Aorta (tissue), 5 donors: ENCODE measurements at regions of chr3 and their contacts with region 1.

Region 1: GRCh38 chr3:185983495-185984141 is 45.8 kb upstream of the TRA2B start:
- DNase-seq: peak; percentile 70 to 83
- ATAC-seq: peak; percentile 92
- H3K4me3 ChIP-seq: no peak overlapping the region
- H3K27ac ChIP-seq: no peak overlapping the region
- H3K4me1 ChIP-seq: no peaks in the 10 kb centered on the region
- H3K27me3 ChIP-seq: no peaks in the 10 kb centered on the region

Region 2: DNA sequence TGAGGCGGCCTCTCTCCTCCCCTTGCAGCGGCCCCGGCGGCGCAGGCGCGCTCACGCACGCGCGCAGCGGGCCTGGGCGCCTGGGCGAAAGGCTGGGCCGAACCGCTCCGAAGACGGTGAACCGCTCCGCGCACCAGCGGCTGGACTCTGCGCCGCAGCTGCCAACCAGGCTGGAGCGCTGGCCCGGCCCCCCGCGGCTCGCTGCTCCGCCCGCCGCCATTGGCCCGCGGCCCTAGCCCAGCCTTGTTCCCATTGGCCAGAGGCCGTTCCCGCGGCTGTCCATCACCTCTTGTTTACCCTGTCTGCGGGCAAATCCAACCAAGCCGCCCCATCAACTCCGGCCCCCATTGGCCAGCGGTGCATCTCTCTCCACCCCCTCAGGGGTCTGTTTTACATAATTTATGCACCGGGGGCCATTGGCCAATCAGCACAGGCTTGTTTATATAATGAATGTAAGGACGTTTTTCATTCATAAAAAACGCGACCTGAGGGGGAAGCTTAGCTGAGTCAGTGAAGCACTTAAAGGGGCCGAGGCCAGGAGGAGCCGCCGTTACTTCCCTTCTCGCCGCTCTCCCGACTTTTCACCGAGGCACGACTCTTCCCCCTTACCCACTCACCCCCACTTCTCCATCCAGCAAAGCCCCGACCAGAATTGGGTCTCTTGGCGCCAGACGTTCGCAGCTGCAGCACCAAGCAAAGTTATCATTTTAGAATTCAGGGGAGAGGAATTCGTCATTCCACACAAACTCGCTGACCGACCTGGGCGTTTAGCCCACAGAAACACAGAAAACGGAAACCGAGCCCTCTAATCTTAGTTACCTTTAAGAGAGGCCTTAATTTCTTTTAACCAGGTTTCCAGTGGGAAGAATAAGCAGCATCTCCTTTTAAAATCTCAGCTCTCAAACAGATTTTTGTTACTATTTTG is 125.6 kb after region 1 on chr3 and contains the start of gene ETV5:
- intact Hi-C with region 1: loop called (anchors 5 kb)
- DNase-seq: peak; percentile 99 to 100
- ATAC-seq: peak; percentile 97
- H3K4me3 ChIP-seq: peak within 1 kb of the TSS; percentile 75 to 87
- H3K27ac ChIP-seq: peak within 1 kb of the TSS; percentile 79 to 87
- H3K4me1 ChIP-seq: no peaks in the 10 kb centered on the region
- H3K27me3 ChIP-seq: no peaks in the 10 kb centered on the region
- total RNA-seq, gene ETV5: 25.5 to 34.0 TPM

Region 3: GRCh38 chr3:186235554-186235953 is 251.9 kb after region 1 on chr3:
- intact Hi-C with region 1: no loop called
- DNase-seq: no peak
- ATAC-seq: no peak
- H3K4me3 ChIP-seq: no peak overlapping the region
- H3K27ac ChIP-seq: no peak overlapping the region
- H3K4me1 ChIP-seq: no peaks in the 10 kb centered on the region
- H3K27me3 ChIP-seq: no peaks in the 10 kb centered on the region

Region 4: DNA sequence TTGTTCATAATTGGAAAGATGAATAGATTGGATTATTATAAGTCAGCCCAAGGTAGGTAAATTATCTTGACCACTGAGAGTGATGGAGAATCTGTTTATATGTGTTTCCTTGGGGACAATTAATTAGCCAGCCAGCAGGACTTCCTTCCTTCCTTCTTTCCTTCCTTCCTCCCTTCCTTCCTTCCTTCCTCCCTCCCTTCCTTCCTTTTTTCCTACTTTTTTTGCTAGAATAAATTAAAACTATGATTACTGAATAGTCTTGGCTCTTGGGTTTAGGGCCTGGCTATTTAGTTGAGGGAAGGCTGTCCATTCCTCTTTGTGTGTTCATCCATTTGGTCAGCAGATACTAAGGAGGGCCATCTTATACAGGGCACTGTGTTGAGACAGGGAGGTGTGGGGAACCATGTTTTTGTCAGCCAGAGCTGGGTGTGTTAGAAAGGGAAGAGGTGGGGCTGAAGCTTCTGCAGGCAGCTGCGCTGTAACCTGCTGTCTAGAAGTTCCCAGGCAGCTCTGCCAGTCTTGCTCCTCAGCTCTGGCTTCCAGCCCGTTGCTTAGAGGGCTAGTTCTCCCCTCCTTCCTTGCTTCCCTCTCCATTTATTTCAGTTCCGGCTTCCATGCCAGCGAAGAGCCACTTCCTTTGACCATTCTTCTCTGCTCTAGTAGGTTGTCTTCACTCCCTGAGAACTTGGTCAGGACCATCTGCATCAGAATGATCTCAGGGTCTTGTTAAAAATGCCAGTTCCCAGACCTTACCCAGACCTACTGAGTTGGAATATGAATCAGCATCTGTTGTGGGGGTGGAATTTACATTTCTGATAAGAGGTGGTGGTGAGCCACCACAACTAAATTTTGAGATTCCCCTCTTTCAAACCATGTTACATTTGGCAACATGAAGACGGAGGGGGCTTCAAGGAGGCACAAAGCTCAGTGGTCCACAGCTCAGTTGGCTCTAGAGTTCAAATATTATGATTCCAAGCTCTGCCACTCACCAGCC is 264.5 kb after region 1 on chr3:
- intact Hi-C with region 1: loop called in 1 of 2 experiments (anchors 5 kb)
- DNase-seq: peak in 1 of 2 donors; percentile 67
- ATAC-seq: no peak
- H3K4me3 ChIP-seq: no peak overlapping the region
- H3K27ac ChIP-seq: no peak overlapping the region
- H3K4me1 ChIP-seq: no peaks in the 10 kb centered on the region
- H3K27me3 ChIP-seq: no peaks in the 10 kb centered on the region

Region 5: DNA sequence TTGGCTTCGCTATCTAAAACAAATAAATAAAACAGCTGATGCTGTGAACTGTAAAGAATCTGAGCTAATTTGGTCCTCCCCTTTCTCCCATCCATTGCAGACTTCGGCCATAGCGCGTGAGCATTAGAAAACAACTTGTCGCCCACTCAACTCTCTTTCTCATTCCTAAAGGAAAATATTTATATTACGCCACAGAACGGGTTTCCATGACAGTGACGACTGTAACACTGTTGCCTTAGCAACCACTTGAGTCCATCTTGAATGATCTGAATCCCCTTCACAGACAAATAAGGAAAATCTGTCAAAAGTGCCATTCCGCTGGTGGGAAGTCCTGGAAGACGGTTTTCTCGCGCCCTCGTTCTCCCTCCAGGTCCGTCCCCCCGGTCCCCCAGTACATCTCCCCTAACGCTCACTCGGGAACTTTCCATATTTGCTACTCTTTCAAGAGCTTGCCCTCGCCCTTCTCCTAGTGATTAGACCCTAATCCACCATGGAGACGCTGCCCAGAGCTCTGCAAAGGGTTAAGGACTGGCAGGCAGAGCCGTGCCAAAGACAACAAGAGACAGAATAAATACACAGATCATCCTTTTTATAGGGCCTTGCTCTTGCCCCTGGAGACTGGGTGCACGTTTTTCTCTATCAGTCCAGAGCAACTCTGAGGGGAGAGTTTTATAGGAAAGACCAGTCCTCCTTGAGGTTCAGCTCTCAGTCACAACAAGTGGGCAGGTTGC is 510.1 kb after region 1 on chr3:
- intact Hi-C with region 1: loop called in 1 of 2 experiments (anchors 5 kb)
- DNase-seq: no peak
- ATAC-seq: peak; percentile 62
- H3K4me3 ChIP-seq: no peak overlapping the region
- H3K27ac ChIP-seq: peak overlapping the region in 1 of 2 donors; percentile 19
- H3K4me1 ChIP-seq: peaks cover 0 to 4% of the 10 kb centered on the region in 2 donors
- H3K27me3 ChIP-seq: no peaks in the 10 kb centered on the region

Region 6: DNA sequence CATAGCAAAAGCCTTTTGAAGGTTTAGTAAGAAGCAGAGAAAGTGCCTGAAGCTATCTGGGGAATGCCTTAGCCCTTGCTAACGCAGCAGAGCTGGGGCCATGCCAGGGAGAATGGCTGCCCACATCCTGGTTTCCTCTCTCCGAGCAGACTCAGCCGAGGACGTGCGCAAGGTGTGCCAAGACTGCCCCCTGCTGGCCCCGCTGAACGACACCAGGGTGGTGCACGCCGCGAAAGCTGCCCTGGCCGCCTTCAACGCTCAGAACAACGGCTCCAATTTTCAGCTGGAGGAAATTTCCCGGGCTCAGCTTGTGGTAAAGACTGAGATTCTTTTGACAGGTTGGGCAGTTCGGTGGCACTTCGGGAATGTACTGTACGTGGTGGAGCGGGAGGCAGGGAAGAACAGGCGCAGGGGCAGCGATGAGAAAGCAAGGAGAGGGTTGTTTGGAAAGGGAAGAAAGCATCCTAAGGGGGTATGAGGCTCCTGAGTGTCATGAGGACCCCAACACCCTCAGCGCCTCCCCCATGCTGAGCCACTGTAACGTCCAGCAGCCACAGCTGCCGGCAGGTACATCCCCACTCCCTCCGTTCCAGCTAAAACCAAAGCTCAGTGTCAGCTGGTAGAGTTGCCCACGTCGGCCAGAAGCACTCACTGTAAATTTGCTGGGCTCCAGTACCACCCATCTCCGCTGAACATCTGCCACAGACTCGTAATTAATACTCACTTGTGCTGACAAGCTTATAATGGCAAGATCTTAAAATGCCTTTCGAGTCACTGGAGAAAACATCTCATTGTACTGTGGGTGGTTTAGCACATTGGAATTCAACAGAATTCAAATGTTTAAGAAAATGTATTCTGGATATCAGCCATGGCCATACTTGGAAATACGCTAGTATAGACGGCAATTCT is 633.7 kb after region 1 on chr3:
- intact Hi-C with region 1: loop called in 1 of 2 experiments (anchors 5 kb)
- DNase-seq: peak; percentile 96 to 97
- ATAC-seq: peak; percentile 92
- H3K4me3 ChIP-seq: no peak overlapping the region
- H3K27ac ChIP-seq: no peak overlapping the region
- H3K4me1 ChIP-seq: no peaks in the 10 kb centered on the region
- H3K27me3 ChIP-seq: peaks cover 0 to under 1% of the 10 kb centered on the region in 2 donors